Naive thymus-derived CD4-positive, alpha-beta T cell (primary cell): ENCODE measurements at regions of chr5 and their contacts with region 1.

Region 1: DNA sequence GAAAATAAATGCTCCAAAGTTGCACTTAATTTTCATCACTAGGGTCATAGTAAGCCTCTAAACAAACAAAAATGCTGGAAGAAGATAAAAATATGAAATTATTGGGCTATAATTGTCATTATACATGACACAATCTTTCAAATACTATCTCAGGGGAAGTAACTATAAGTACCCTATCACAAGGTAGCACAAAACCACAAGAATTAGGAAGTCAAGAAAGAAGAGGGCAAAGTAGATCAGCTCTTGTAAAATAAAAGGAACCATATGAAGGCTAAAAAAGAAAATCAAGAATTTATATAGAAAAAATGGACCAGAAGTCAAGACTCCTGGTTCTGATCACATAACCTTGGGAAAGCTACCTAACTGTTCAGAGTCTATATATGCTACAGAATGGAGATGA is 48.1 kb downstream of the DIAPH1 start:
- DNase-seq: no peak
- ATAC-seq: peak; percentile 64
- H3K4me3 ChIP-seq: no peak overlapping the region
- H3K4me3 Mint-ChIP-seq: no peak overlapping the region
- H3K27ac ChIP-seq: no peak overlapping the region
- H3K27ac Mint-ChIP-seq: peak overlapping the region in 7 of 9 donors; percentile 0 to 55 (median 18)
- H3K4me1 ChIP-seq: no peaks in the 10 kb centered on the region
- H3K4me1 Mint-ChIP-seq: peaks cover 7 to 20% (median 13%) of the 10 kb centered on the region in 7 donors
- H3K27me3 ChIP-seq: no peaks in the 10 kb centered on the region
- H3K27me3 Mint-ChIP-seq: no peaks in the 10 kb centered on the region

Region 2: GRCh38 chr5:141402553-141403260 is 167.9 kb before region 1 on chr5 and contains the start of gene PCDHGA9:
- CTCF ChIA-PET with region 1: no interaction called
- POLR2A ChIA-PET with region 1: no interaction called
- intact Hi-C with region 1: no loop called
- DNase-seq: no peak
- ATAC-seq: no peak
- H3K4me3 ChIP-seq: no peak within 1 kb of the TSS
- H3K4me3 Mint-ChIP-seq: peak within 1 kb of the TSS in 9 of 10 donors; percentile 28 to 76 (median 68)
- H3K27ac ChIP-seq: no peak within 1 kb of the TSS
- H3K27ac Mint-ChIP-seq: peak within 1 kb of the TSS in 3 of 9 donors; percentile 8 to 49 (median 49)
- H3K4me1 ChIP-seq: no peaks in the 10 kb centered on the region
- H3K4me1 Mint-ChIP-seq: peaks cover 0 to 11% (median 4%) of the 10 kb centered on the region in 7 donors
- H3K27me3 ChIP-seq: peaks cover 7 to 26% of the 10 kb centered on the region in 2 donors
- H3K27me3 Mint-ChIP-seq: peaks cover 50 to 82% (median 74%) of the 10 kb centered on the region in 5 donors
- total RNA-seq, gene PCDHGA9: 0.16 to 0.41 (median 0.22) TPM in 4 of 5 experiments, not detected in the other

Region 3: GRCh38 chr5:141590127-141590526 is 19.5 kb after region 1 on chr5:
- CTCF ChIA-PET with region 1: interaction called, 3 read pairs
- POLR2A ChIA-PET with region 1: interaction called, 3 read pairs
- intact Hi-C with region 1: loop called (anchors 2 kb)
- DNase-seq: no peak
- ATAC-seq: peak; percentile 37
- H3K4me3 ChIP-seq: no peak overlapping the region
- H3K4me3 Mint-ChIP-seq: no peak overlapping the region
- H3K27ac ChIP-seq: no peak overlapping the region
- H3K27ac Mint-ChIP-seq: peak overlapping the region in 1 of 9 donors; percentile 56
- H3K4me1 ChIP-seq: peaks cover 12 to 13% of the 10 kb centered on the region in 2 donors
- H3K4me1 Mint-ChIP-seq: peaks cover 40 to 71% (median 58%) of the 10 kb centered on the region in 7 donors
- H3K27me3 ChIP-seq: no peaks in the 10 kb centered on the region
- H3K27me3 Mint-ChIP-seq: no peaks in the 10 kb centered on the region